Calu3 (cell line): ENCODE measurements at regions of chr1 and their contacts with region 1.

Region 1: DNA sequence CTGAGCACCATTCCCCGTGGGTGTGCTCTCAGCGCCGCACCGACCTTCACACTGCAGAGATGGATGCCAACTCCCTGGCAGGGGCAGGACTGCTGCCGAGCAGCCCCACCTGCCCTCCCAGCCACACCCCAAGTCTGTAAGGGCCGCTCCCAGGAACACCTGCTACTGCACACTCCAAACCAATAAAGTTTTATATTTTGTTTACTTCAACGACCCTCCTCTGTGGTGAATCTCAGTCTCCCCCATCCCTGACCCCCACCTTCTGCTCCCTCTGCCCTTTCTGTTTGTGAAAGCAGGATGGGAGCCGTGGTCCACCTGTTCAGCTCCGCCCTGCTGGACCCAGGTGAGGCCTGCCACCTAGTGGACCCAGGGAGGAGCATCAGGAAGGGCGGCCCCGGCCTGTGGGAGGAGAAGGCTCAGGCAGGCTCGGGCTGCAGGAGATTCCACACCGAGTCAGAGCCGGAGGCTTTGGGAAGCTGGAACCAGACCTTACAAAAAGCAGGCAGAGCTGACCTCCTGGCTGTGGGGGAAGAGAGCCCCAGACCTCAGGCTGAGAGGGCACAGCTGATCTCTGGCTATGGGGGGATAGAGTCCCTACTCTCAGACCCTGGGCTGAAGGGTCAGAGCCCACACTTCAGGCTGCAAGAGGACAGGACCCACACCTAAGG is 982 bp upstream of the TMEM82 start:
- DNase-seq: peak; percentile 85
- H3K4me3 Mint-ChIP-seq: no peak overlapping the region
- H3K27ac Mint-ChIP-seq: no peak overlapping the region
- H3K4me1 Mint-ChIP-seq: peaks cover 9% of the 10 kb centered on the region
- H3K27me3 Mint-ChIP-seq: no peaks in the 10 kb centered on the region
- CTCF ChIP-seq: no peak

Region 2: DNA sequence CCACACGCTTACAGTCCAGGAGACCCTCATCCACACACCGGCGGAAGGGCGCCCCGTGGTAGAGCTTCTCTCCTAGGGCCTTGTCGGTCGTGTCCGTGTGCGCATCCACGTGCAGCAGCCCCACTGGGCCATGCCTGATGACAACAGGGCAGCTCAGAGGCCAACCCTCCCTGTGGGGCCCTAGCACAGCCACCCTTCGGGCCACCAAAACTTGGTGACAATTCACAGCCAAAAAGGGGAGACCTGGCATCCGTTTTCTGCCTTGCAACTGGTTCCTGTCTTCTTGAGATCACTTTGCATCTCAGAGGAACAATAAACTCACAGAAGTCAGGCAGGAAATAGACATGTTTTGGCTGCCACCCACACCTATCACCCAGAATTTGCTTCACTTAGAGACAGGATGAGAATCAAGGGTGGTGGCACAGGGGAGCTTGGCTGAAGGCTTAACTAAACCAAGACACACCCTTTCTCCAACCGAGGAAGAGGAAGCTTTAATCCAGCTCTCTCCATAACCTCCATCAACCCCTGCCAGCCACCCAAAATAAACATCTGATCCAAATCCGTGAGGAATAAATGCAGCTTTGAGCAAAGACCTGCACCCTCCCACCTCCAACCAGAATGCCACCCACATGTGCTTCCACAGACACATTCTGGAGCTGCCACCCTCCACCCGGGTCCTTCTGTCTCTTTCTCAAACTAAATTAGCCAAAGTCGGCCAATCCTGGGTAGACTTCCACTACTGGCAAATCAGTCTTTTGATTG is 162.2 kb before region 1 on chr1:
- CTCF ChIA-PET with region 1: no interaction called
- intact Hi-C with region 1: no loop called
- DNase-seq: no peak
- H3K4me3 Mint-ChIP-seq: no peak overlapping the region
- H3K27ac Mint-ChIP-seq: no peak overlapping the region
- H3K4me1 Mint-ChIP-seq: no peaks in the 10 kb centered on the region
- H3K27me3 Mint-ChIP-seq: no peaks in the 10 kb centered on the region
- CTCF ChIP-seq: no peak

Region 3: DNA sequence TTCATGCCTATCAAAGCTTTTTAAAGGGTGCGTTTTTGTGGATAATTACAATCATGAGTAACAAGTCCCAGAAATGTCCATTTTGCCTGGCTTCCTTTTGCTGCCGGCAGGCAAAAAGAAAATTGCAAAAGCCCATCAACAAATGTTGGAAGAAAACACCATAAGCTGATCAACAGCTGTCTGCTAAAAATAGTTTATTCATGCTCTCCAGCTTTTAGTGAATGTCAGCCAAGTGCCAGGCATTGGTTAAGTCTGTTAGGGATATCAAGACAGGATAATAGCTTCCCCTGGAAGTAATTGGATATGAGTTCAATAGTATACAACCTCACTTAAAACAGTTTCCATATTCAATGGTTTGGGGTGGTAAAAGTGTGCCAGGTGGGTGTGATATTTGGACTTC is 142.9 kb before region 1 on chr1:
- CTCF ChIA-PET with region 1: no interaction called
- intact Hi-C with region 1: loop called (anchors 5 kb)
- DNase-seq: no peak
- H3K4me3 Mint-ChIP-seq: no peak overlapping the region
- H3K27ac Mint-ChIP-seq: no peak overlapping the region
- H3K4me1 Mint-ChIP-seq: no peaks in the 10 kb centered on the region
- H3K27me3 Mint-ChIP-seq: no peaks in the 10 kb centered on the region
- CTCF ChIP-seq: no peak

Region 4: DNA sequence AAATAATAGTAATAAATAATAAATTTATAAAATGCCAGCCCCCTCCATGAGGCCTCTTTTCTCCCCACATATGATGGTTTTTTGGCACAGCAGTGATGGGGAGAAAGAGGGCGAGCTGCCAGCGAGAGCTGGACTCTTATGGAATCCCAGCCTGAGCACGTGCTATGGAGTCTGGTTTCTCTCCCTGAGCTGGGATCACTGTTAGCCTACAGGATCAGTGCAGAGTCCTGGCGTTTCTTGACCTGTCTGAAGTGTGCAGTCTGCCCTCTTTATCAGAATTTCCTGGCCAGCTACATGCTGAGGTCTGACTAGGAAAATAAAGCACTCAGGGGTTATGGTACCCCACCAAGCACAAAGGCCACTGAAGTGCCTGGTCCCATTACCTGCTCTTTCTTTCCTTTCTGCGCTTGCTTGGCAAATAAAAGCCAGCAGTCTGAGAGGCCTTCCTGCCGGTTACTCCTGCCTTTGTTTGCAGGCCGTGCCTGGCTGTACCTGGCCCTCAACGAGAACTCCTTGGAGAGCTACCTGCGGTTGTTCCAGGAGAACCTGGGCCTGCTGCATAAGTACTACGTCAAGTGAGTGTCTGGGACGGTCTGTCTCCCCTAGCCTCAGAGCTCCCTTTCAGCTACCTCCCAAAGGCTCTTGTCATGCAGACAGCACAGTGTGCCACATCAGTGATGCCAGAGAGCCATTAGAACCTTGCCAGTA is 23.7 kb before region 1 on chr1:
- CTCF ChIA-PET with region 1: no interaction called
- intact Hi-C with region 1: no loop called
- DNase-seq: no peak
- H3K4me3 Mint-ChIP-seq: no peak overlapping the region
- H3K27ac Mint-ChIP-seq: no peak overlapping the region
- H3K4me1 Mint-ChIP-seq: no peaks in the 10 kb centered on the region
- H3K27me3 Mint-ChIP-seq: no peaks in the 10 kb centered on the region
- CTCF ChIP-seq: no peak